ENCODE measurements at regions of chr15 and their contacts with region 1.

Region 1: DNA sequence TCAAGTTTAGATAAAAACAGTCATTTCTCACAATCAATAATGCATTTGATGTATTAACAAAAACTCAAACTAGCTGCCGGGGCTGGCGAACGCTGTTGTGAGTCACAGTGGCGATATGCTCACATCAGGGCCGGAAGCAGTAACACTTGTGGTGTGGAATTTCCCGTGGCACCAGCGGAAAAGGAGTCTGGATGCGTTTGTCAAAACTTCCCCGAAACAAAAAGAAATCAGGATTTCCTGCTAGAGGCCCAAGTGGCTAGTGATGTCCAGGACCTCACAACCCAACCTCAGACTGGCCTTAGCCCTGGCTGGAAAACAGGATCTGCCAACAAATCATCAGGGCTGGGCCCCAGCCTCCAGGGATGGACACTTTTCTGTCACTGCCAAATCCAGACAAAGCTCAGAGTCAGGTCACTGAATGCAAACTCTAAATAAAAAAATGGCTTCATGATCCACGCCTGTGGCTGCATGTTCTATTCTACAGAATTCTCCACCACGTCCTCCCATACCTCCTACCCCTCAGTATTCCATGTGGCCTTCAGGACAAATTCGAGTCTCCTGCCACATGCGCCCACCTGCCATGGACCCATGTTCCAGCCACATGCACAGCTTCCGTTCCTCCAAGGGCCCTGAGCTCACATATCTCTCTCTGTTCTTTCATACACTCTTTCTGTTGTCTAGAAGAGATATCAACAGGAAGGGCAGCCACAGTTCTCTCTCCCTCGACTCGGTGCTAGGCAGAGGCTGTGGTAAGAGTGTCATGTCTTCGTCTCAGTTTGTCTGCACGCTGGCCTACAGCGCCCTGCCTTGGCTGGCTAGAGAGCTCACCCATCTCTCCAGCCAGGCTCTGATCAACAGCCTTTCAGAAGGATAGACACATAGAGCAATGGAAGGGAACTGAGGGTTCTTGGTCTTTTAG is 35.4 kb downstream of the EHD4 start:
- DNase-seq: peak; percentile 64 to 94
- ATAC-seq: peak; percentile 77 to 92 (median 88)
- H3K4me3 ChIP-seq: peak overlapping the region; percentile 2
- H3K4me3 Mint-ChIP-seq: peak overlapping the region; percentile 66
- H3K27ac ChIP-seq: peak overlapping the region; percentile 96
- H3K27ac Mint-ChIP-seq: peak overlapping the region; percentile 93 to 94
- H3K4me1 ChIP-seq: peaks cover 50% of the 10 kb centered on the region
- H3K4me1 Mint-ChIP-seq: peaks cover 40 to 43% of the 10 kb centered on the region in 2 donors
- H3K27me3 ChIP-seq: no peaks in the 10 kb centered on the region
- H3K27me3 Mint-ChIP-seq: no peaks in the 10 kb centered on the region
- CTCF ChIP-seq: peak; percentile 34

Region 2: GRCh38 chr15:41820791-41821423 is 116.0 kb before region 1 on chr15:
- intact Hi-C with region 1: no loop called
- DNase-seq: no peak
- ATAC-seq: no peak
- H3K4me3 ChIP-seq: no peak overlapping the region
- H3K4me3 Mint-ChIP-seq: no peak overlapping the region
- H3K27ac ChIP-seq: no peak overlapping the region
- H3K27ac Mint-ChIP-seq: no peak overlapping the region
- H3K4me1 ChIP-seq: no peaks in the 10 kb centered on the region
- H3K4me1 Mint-ChIP-seq: no peaks in the 10 kb centered on the region
- H3K27me3 ChIP-seq: no peaks in the 10 kb centered on the region
- H3K27me3 Mint-ChIP-seq: no peaks in the 10 kb centered on the region
- CTCF ChIP-seq: no peak

Region 3: GRCh38 chr15:41894791-41895463 is 42.0 kb before region 1 on chr15:
- intact Hi-C with region 1: loop called (anchors 2 kb)
- DNase-seq: peak; percentile 89 to 94
- ATAC-seq: peak; percentile 93 to 98 (median 97)
- H3K4me3 ChIP-seq: peak overlapping the region; percentile 25
- H3K4me3 Mint-ChIP-seq: peak overlapping the region; percentile 83
- H3K27ac ChIP-seq: peak overlapping the region; percentile 91
- H3K27ac Mint-ChIP-seq: peak overlapping the region; percentile 97
- H3K4me1 ChIP-seq: peaks cover 46% of the 10 kb centered on the region
- H3K4me1 Mint-ChIP-seq: peaks cover 14 to 40% of the 10 kb centered on the region in 2 donors
- H3K27me3 ChIP-seq: no peaks in the 10 kb centered on the region
- H3K27me3 Mint-ChIP-seq: no peaks in the 10 kb centered on the region
- CTCF ChIP-seq: peak; percentile 12

Region 4: GRCh38 chr15:41972253-41973242 is 35.6 kb after region 1 on chr15 and contains the start of gene EHD4:
- intact Hi-C with region 1: loop called (anchors 1 kb)
- DNase-seq: peak; percentile 93 to 98
- ATAC-seq: peak; percentile 83 to 94 (median 88)
- H3K4me3 ChIP-seq: peak within 1 kb of the TSS; percentile 78
- H3K4me3 Mint-ChIP-seq: peak within 1 kb of the TSS; percentile 92
- H3K27ac ChIP-seq: peak within 1 kb of the TSS; percentile 85
- H3K27ac Mint-ChIP-seq: peak within 1 kb of the TSS; percentile 94 to 97
- H3K4me1 ChIP-seq: peaks cover 24% of the 10 kb centered on the region
- H3K4me1 Mint-ChIP-seq: peaks cover 31 to 36% of the 10 kb centered on the region in 2 donors
- H3K27me3 ChIP-seq: peaks cover 4% of the 10 kb centered on the region
- H3K27me3 Mint-ChIP-seq: peaks cover 15 to 21% of the 10 kb centered on the region in 2 donors
- CTCF ChIP-seq: peak; percentile 45
- total RNA-seq, gene EHD4: 28.4 to 34.6 (median 31.7) TPM

Measured in natural killer cell (primary cell).